CD4-positive, alpha-beta memory T cell (primary cell): ENCODE measurements at regions of chr3 and their contacts with region 1.

Region 1: DNA sequence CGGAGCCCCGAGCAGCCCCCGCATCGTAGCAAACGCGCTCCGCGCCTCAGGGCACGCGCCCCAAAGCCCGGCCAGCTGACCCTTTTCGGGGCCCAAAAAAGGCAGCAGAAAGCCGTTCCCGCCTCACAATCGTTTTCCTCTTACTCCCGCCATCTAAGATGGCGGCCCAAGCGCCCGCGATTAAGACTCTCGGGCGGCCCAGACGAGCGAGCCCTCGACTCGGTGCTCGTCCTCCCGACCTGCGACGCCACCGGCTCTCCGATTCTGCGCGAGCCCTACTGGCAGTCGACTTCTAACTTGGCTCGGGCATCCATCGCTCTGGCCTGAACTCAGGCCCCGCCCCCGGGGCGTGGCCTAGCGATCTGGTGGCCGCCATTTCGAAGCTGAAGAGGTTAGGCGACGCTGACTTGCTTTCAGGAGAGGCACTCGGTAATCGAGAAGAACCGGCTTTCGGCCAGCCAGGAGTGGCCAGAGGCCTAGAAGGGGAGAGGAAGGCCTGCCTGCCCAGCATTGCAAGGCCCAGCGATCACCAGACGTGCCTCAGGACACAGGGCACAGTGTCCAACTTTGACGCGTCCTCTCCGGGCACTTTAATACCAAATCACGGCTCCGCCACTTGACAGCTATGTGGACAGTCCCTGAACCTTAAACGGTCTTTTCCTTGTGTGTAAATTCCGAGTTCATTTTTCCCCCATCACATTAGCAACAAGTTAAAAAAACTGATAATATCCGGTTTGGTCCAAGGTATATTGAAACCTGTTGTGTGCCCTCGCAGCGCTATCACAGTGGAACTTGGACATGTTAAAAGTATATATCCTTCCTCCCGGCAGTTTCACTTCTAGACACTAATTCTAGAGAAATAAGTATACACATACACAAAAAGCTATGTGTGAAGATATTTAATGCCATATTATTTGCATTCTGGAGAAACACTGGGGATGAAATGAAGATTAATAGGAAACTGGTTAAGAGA is at the start of gene RAF1:
- DNase-seq: peak; percentile 97 to 98 (median 98)
- H3K4me3 ChIP-seq: peak within 1 kb of the TSS; percentile 93 to 99
- H3K4me3 Mint-ChIP-seq: peak within 1 kb of the TSS; percentile 88 to 100 (median 98)
- H3K27ac ChIP-seq: peak within 1 kb of the TSS; percentile 95
- H3K27ac Mint-ChIP-seq: peak within 1 kb of the TSS; percentile 98 to 99 (median 99)
- H3K4me1 ChIP-seq: peaks cover 40% of the 10 kb centered on the region
- H3K4me1 Mint-ChIP-seq: peaks cover 20 to 48% (median 29%) of the 10 kb centered on the region in 4 donors
- H3K27me3 ChIP-seq: no peaks in the 10 kb centered on the region
- H3K27me3 Mint-ChIP-seq: no peaks in the 10 kb centered on the region
- total RNA-seq, gene RAF1: 116 to 120 TPM

Region 2: GRCh38 chr3:12224181-12225147 is 439.8 kb before region 1 on chr3:
- CTCF ChIA-PET with region 1: no interaction called
- POLR2A ChIA-PET with region 1: no interaction called
- intact Hi-C with region 1: no loop called
- DNase-seq: no peak
- H3K4me3 ChIP-seq: no peak overlapping the region
- H3K4me3 Mint-ChIP-seq: no peak overlapping the region
- H3K27ac ChIP-seq: no peak overlapping the region
- H3K27ac Mint-ChIP-seq: no peak overlapping the region
- H3K4me1 ChIP-seq: no peaks in the 10 kb centered on the region
- H3K4me1 Mint-ChIP-seq: no peaks in the 10 kb centered on the region
- H3K27me3 ChIP-seq: peaks cover 4% of the 10 kb centered on the region
- H3K27me3 Mint-ChIP-seq: peaks cover 4 to 10% of the 10 kb centered on the region in 2 donors

Region 3: DNA sequence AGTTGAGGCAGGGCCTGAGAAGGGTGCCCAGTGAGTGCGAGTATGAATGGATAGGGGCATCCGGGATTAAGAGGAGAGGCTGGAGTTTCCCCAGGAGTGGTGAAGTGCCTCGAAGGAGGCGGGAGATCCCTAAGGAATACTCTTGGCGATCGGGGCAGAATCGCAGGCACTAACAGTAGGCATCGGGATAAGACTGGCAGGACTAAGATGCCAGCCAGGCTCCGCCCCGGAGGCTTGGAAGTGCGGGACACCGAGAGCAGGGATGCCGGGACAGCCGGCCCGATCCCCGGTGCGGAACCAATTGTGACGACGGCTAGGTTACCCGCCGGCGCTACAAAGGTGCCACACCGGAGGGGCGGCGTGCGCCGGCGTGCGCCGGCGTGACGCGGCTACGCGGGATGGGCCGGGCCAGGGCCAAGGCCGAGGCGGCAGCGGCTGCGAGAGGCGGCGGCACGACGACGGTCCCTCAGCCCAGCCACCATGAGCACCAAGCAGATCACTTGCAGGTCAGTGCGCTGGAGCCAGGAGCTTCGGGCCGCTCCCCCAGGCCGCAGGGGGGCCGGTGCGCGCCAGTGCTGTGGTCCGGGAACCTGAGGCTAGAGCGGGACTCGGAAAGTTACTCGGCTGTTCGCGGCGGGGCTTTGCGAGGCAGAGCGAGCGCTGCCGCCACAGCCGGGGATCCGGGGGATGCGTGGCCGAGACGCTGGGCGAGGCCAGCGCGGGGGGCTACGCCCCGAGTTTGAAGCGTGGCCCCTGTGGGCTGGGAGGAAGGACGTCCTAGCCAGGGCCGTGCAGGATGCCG is 107.3 kb before region 1 on chr3 and contains the start of gene MKRN2:
- CTCF ChIA-PET with region 1: no interaction called
- POLR2A ChIA-PET with region 1: interaction called, 15 read pairs
- intact Hi-C with region 1: loop called (anchors 1 kb)
- DNase-seq: peak; percentile 81 to 87 (median 82)
- H3K4me3 ChIP-seq: peak within 1 kb of the TSS; percentile 75 to 92
- H3K4me3 Mint-ChIP-seq: peak within 1 kb of the TSS; percentile 89 to 99 (median 94)
- H3K27ac ChIP-seq: peak within 1 kb of the TSS; percentile 93
- H3K27ac Mint-ChIP-seq: peak within 1 kb of the TSS; percentile 88 to 98 (median 95)
- H3K4me1 ChIP-seq: peaks cover 52% of the 10 kb centered on the region
- H3K4me1 Mint-ChIP-seq: peaks cover 43 to 68% (median 55%) of the 10 kb centered on the region in 4 donors
- H3K27me3 ChIP-seq: peaks cover 14% of the 10 kb centered on the region
- H3K27me3 Mint-ChIP-seq: peaks cover 21 to 23% of the 10 kb centered on the region in 2 donors
- total RNA-seq, gene MKRN2: 31.7 to 32.0 TPM

Region 4: DNA sequence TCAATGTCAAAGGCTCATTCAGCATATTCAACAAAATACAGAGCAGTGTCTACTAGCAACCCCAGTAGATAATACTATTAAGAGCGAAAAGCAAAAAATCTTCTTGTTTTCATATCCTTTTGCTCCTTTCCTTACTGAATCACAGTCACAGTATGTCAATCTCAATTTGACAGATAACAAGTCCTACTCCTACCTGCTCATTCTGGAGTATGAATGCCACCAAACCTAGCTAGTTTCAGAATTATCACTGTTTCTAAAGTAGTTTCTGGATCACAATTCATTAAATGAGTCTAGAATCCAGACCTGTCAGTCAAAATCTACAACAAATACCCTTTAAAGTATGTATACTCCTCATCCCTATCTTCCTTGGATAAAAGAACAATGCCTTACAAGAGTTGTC is 55.8 kb before region 1 on chr3:
- CTCF ChIA-PET with region 1: interaction called, 3 read pairs
- POLR2A ChIA-PET with region 1: interaction called, 16 read pairs
- intact Hi-C with region 1: loop called (anchors 10 kb)
- DNase-seq: no peak
- H3K4me3 ChIP-seq: no peak overlapping the region
- H3K4me3 Mint-ChIP-seq: no peak overlapping the region
- H3K27ac ChIP-seq: no peak overlapping the region
- H3K27ac Mint-ChIP-seq: peak overlapping the region in 3 of 7 donors; percentile 0 to 22 (median 7)
- H3K4me1 ChIP-seq: peaks cover 12% of the 10 kb centered on the region
- H3K4me1 Mint-ChIP-seq: peaks cover 13 to 24% (median 20%) of the 10 kb centered on the region in 4 donors
- H3K27me3 ChIP-seq: no peaks in the 10 kb centered on the region
- H3K27me3 Mint-ChIP-seq: no peaks in the 10 kb centered on the region

Region 5: DNA sequence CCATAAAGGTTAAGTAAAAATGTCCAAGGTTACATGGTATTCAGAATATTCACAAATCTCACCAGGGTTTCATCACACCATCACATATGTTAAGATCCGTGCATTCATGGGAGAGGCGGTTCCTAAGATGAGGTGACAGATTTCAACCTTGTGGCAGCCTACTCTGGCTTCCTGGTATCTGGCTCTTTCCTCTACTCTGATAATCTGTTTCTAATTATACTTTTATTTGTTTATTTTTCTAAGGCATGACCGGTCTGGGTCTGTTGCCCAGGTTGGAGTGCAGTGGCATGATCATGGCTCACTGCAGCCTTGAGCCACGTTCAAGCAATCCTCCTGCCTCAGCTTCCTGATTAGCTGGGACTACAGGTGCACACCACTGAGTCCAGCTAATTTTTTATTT is 34.7 kb before region 1 on chr3:
- CTCF ChIA-PET with region 1: no interaction called
- POLR2A ChIA-PET with region 1: interaction called, 11 read pairs
- intact Hi-C with region 1: loop called (anchors 5 kb)
- DNase-seq: no peak
- H3K4me3 ChIP-seq: no peak overlapping the region
- H3K4me3 Mint-ChIP-seq: peak overlapping the region in 1 of 8 donors; percentile 36
- H3K27ac ChIP-seq: no peak overlapping the region
- H3K27ac Mint-ChIP-seq: peak overlapping the region in 3 of 7 donors; percentile 23 to 54 (median 32)
- H3K4me1 ChIP-seq: peaks cover 71% of the 10 kb centered on the region
- H3K4me1 Mint-ChIP-seq: peaks cover 35 to 72% (median 52%) of the 10 kb centered on the region in 4 donors
- H3K27me3 ChIP-seq: no peaks in the 10 kb centered on the region
- H3K27me3 Mint-ChIP-seq: no peaks in the 10 kb centered on the region

Region 6: GRCh38 chr3:12967606-12968351 is 303.6 kb after region 1 on chr3:
- CTCF ChIA-PET with region 1: no interaction called
- POLR2A ChIA-PET with region 1: no interaction called
- intact Hi-C with region 1: loop called (anchors 10 kb)
- DNase-seq: peak; percentile 82 to 89 (median 83)
- H3K4me3 ChIP-seq: peak overlapping the region in 1 of 2 donors; percentile 50
- H3K4me3 Mint-ChIP-seq: peak overlapping the region; percentile 67 to 86 (median 82)
- H3K27ac ChIP-seq: peak overlapping the region; percentile 8
- H3K27ac Mint-ChIP-seq: peak overlapping the region; percentile 27 to 89 (median 78)
- H3K4me1 ChIP-seq: peaks cover 68% of the 10 kb centered on the region
- H3K4me1 Mint-ChIP-seq: peaks cover 47 to 87% (median 65%) of the 10 kb centered on the region in 4 donors
- H3K27me3 ChIP-seq: no peaks in the 10 kb centered on the region
- H3K27me3 Mint-ChIP-seq: no peaks in the 10 kb centered on the region